ENCODE measurements at regions of chr7 and their contacts with region 1.

Region 1: DNA sequence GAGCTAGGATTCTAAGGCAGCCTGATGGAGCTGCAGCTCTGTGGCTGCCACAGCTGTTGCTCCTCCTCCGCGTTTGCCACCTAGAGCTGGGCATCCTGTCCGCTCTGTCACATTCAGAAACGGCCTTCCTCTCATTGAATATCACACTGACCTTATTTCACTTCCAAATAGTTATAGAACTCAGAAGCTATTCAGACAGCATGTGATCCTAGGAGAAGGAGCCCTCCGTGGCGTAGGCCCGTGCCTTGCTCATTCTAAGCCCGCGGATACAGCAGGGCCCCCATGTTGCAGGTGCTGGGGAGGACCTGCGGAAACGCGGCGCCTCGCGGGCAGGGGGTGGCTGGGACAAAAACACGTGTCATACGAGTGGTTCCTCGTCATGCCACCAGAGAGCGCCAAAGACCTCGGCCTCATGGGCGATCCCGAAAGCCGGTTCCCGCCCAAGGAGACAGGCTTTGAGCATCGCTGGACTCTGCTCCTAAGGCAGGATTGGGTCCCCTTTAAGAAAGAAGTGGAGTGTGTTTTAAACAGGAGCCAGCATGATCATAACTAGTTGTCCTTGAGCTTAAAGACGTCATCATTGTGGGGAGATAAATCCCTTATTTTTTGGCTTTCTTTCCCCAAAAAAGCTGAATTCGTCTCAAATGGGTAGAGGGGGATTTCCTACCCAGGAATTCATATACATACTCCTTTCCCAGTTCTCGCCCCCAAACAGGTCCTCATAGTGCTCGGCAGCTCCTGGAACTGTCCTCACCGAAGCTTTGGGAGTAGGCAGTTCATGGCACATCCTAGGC is 17.9 kb upstream of the FIGNL1 start:
- DNase-seq: peak; percentile 89
- ATAC-seq: peak; percentile 96
- H3K4me3 Mint-ChIP-seq: no peak overlapping the region
- H3K27ac Mint-ChIP-seq: peak overlapping the region; percentile 24
- H3K4me1 Mint-ChIP-seq: peaks cover 13% of the 10 kb centered on the region
- H3K27me3 Mint-ChIP-seq: peaks cover 6% of the 10 kb centered on the region

Region 2: GRCh38 chr7:50092579-50093491 is 375.2 kb before region 1 on chr7 and contains the start of gene ZPBP:
- CTCF ChIA-PET with region 1: interaction called, 21 read pairs
- DNase-seq: peak; percentile 59
- ATAC-seq: peak; percentile 75
- H3K4me3 Mint-ChIP-seq: peak within 1 kb of the TSS; percentile 76
- H3K27ac Mint-ChIP-seq: peak within 1 kb of the TSS; percentile 72
- H3K4me1 Mint-ChIP-seq: peaks cover 8% of the 10 kb centered on the region
- H3K27me3 Mint-ChIP-seq: peaks cover 24% of the 10 kb centered on the region
- total RNA-seq, gene ZPBP: not detected

Region 3: GRCh38 chr7:50608196-50608906 is 140.3 kb after region 1 on chr7:
- CTCF ChIA-PET with region 1: interaction called, 11 read pairs
- DNase-seq: peak; percentile 37
- ATAC-seq: peak; percentile 73
- H3K4me3 Mint-ChIP-seq: peak overlapping the region; percentile 46
- H3K27ac Mint-ChIP-seq: peak overlapping the region; percentile 78
- H3K4me1 Mint-ChIP-seq: peaks cover 42% of the 10 kb centered on the region
- H3K27me3 Mint-ChIP-seq: peaks cover 19% of the 10 kb centered on the region

Region 4: GRCh38 chr7:50632561-50633413 is 164.8 kb after region 1 on chr7:
- CTCF ChIA-PET with region 1: interaction called, 58 read pairs
- DNase-seq: peak; percentile 74
- ATAC-seq: peak; percentile 86
- H3K4me3 Mint-ChIP-seq: no peak overlapping the region
- H3K27ac Mint-ChIP-seq: peak overlapping the region; percentile 48
- H3K4me1 Mint-ChIP-seq: peaks cover 9% of the 10 kb centered on the region
- H3K27me3 Mint-ChIP-seq: peaks cover 39% of the 10 kb centered on the region

Region 5: DNA sequence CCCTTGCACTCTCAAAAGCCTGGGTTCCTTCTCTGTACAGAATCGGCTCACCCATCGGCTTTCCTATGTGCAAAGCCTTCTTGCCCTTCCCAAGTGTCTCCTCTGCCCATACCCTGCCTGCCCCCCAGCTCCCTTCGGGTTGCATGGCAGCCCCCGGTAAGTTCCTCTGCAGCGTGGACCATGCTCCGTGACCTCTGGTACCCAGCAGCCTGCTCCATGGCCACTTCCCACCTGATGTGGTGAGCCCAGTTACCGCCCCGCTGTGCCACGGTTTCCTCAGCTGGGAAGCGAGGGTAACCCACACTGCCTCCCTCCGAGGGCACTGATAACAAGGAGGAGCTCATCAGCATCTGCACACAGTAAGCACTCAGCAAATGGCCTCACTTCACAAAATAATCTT is 204.0 kb after region 1 on chr7:
- CTCF ChIA-PET with region 1: interaction called, 77 read pairs
- DNase-seq: no peak
- ATAC-seq: no peak
- H3K4me3 Mint-ChIP-seq: no peak overlapping the region
- H3K27ac Mint-ChIP-seq: no peak overlapping the region
- H3K4me1 Mint-ChIP-seq: peaks cover 11% of the 10 kb centered on the region
- H3K27me3 Mint-ChIP-seq: peaks cover 9% of the 10 kb centered on the region

Region 6: DNA sequence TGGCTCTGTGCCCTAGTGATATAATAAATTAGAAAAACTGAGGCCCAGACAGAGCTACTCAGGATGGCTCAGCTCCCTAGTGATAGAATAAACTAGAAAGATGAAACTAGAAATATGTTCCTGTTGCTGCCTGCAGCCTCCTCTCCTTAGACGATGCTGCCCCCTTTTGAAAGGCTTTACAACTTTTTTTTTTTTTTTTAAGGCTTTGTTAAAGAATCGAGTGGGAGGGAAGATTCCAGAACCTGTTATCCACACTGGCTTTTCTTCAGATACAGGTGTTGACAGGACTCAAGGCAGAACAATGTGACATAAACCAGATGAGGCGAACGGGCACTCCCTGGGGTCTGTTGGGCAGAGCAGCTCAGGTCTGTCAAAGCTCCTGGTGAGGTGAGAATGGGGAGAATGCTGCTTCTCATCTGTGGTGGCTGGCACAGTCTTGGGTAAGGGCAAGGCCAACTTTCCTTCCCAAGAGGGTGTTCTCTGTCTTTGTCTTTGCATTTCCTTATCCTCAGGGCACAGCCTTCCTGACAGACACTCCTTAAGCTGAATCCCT is 673.5 kb after region 1 on chr7:
- CTCF ChIA-PET with region 1: interaction called, 15 read pairs
- DNase-seq: no peak
- ATAC-seq: no peak
- H3K4me3 Mint-ChIP-seq: no peak overlapping the region
- H3K27ac Mint-ChIP-seq: no peak overlapping the region
- H3K4me1 Mint-ChIP-seq: peaks cover 18% of the 10 kb centered on the region
- H3K27me3 Mint-ChIP-seq: peaks cover 13% of the 10 kb centered on the region

Measured in activated CD8-positive, alpha-beta memory T cell treated with anti-CD3 and anti-CD28 coated beads, Interleukin-2, amount 10 ng/mL, durations not matched to agents 7 days and 5 days (primary cell).